ENCODE measurements at regions of chr9 and their contacts with region 1.

Region 1: DNA sequence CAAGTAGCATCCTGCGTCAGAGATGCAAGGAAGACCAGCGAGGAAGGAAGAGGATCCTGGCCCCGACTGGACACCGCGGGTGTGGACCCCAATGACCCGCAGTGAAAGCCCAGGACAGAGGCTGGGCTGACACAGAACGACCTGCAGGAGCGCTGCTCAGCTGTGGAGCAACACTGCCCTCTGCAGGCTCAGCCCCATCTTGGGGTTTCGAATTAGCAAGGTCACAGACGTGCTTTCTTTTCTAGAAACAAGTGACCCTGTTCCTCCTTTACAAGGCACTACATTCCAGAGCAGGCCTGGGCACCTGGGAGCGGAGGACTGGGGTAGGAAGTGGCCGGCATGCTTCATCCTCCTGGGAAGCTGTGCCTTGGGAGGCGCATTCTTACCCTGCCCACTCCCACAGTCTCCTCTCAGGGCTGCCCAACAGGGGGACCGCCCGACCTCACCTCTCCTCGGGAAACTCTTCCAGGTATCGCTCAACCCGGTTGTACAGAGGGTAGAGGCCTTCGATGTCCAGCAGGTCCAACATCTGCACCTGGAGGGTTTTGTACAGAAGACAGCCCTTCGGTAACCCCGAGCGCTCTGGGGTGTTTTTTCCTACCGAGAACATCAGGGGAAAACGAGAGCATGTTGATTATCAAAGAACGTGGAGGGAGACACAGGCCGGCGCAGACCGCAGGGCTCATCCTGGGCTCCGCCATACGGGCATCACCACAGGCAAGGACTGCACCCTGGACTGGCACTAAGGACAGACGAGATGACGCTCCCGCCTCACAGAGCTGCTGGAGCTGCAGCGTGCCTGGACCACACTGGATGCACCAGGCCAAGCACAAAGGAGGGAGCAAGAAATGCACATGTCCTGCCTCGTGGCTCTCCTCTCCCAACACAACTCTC is 35.0 kb downstream of the IPPK start:
- DNase-seq: peak; percentile 86 to 93
- ATAC-seq: peak; percentile 94
- H3K4me3 ChIP-seq: no peak overlapping the region
- H3K27ac ChIP-seq: no peak overlapping the region
- H3K4me1 ChIP-seq: no peaks in the 10 kb centered on the region
- H3K27me3 ChIP-seq: no peaks in the 10 kb centered on the region

Region 2: GRCh38 chr9:92140074-92140753 is 494.7 kb before region 1 on chr9:
- intact Hi-C with region 1: loop called in 1 of 2 experiments (anchors 2 kb)
- DNase-seq: peak; percentile 86 to 93
- ATAC-seq: peak; percentile 81
- H3K4me3 ChIP-seq: no peak overlapping the region
- H3K27ac ChIP-seq: no peak overlapping the region
- H3K4me1 ChIP-seq: no peaks in the 10 kb centered on the region
- H3K27me3 ChIP-seq: no peaks in the 10 kb centered on the region

Region 3: DNA sequence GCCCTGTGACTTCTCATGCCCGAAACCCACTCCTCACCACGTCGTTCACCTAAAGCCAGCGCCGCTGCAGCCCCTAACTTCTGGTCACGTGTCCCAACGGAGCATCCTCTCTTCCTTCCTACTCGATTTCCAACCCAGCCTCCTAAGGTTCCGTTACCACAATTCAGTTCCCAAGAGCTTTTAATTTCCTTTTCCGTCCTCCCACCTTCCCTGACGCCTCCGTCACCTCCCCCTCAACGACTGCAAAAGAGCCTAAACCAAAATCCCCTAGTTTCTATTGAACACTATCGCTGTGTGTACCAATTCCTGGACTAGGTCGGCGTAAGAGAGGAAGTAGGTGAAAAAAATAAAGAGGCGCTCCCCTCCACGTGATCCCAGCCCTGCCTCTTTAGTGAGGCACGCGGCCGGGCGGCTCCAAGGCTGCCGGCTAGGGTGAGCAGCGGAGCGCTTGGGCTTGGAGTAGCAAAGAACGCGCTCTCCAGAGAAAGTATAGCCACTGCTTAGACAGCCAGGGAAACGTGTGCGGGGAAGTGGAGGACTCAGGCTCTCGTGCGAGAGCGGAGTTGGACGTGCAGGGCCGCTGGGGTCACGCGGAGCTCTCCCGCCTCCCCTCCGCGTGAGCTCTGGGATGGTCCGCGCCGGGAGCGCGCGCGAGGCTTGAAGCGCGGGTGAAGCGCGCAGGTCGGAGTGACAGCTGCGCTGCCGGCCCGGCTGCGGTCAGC is 309.5 kb before region 1 on chr9 and contains the starts of genes CENPP and NOL8:
- intact Hi-C with region 1: loop called in 1 of 2 experiments (anchors 2 kb)
- DNase-seq: peak; percentile 92
- ATAC-seq: peak; percentile 98
- H3K4me3 ChIP-seq: peak within 1 kb of the TSS; percentile 62 to 88
- H3K27ac ChIP-seq: peak within 1 kb of the TSS; percentile 69 to 92
- H3K4me1 ChIP-seq: peaks cover 0 to 4% of the 10 kb centered on the region in 2 donors
- H3K27me3 ChIP-seq: no peaks in the 10 kb centered on the region
- total RNA-seq, gene CENPP: 3.9 to 11.1 TPM
- total RNA-seq, gene NOL8: 29.7 to 43.1 TPM

Region 4: DNA sequence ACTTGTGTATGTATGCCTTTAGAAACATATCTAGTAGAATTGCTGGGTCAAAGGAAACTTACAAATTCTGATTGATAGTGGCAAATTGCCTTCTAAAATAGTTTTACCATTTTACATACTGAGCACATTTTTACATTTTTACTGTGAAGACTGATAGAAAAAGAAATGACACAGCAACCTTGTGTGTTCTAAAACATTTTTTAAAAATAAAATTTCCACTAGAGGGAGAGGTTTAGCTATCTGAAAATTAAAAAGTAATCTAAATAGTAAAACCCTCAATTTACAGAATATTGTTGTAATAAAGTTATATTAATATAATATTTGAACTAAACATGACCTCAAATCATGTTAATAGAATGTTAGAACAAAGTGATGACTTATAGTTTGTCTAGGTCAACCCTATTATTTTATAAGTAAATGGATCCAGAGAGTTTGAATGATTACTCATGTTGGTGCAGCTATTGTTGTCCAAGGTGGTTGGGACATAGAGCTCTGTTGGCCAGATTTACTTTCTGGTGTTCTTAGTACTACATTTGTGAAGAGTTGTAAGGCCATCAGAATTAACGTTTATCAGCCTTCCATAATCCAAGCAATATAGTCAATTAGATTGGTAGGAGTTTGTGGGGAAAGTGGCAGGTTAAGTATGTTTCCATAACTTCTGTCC is 292.0 kb before region 1 on chr9:
- intact Hi-C with region 1: loop called (anchors 2 to 5 kb)
- DNase-seq: no peak
- ATAC-seq: no peak
- H3K4me3 ChIP-seq: no peak overlapping the region
- H3K27ac ChIP-seq: no peak overlapping the region
- H3K4me1 ChIP-seq: peaks cover 0 to 2% of the 10 kb centered on the region in 2 donors
- H3K27me3 ChIP-seq: no peaks in the 10 kb centered on the region

Region 5: GRCh38 chr9:92438900-92439526 is 195.9 kb before region 1 on chr9:
- intact Hi-C with region 1: loop called in 1 of 2 experiments (anchors 5 kb)
- DNase-seq: no peak
- ATAC-seq: no peak
- H3K4me3 ChIP-seq: no peak overlapping the region
- H3K27ac ChIP-seq: no peak overlapping the region
- H3K4me1 ChIP-seq: peaks cover 0 to 2% of the 10 kb centered on the region in 2 donors
- H3K27me3 ChIP-seq: no peaks in the 10 kb centered on the region

Region 6: DNA sequence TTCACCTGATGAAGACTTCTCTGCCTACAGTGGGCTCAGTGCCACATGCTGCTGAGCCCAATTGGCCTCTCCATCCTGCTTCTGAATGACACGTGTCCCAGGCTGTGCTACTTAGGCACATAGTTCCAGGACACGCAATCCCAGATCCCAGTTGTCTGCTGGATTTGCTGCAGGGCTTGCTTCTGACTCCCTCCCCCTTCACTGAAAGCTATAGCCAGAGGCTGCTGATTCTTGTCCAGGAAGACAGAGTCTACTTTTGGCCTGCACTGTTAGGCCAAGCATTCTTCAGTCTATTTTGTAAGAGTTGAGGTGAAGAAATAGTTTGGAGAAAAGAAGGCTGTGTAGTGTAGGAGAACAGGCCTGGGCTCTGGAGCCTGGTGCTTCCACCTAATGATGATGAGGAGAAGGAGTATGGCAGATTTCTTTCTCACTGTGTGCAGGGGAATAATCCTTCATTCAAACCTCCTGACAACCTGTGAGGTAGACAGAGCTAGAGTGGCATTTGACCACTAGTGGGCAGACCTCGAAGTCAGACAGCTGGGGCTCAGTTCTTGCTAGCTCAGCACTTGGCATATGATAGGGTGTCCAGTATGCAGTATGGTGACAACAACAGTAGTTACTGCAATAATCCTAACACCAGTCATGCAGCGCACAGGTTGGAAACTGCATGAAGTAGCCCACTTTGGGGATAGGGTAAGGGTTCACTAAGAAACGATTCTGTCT is 133.1 kb before region 1 on chr9:
- intact Hi-C with region 1: loop called in 1 of 2 experiments (anchors 10 kb)
- DNase-seq: peak in 1 of 2 donors; percentile 68
- ATAC-seq: peak; percentile 71
- H3K4me3 ChIP-seq: no peak overlapping the region
- H3K27ac ChIP-seq: peak overlapping the region; percentile 52 to 90
- H3K4me1 ChIP-seq: peaks cover 4 to 6% of the 10 kb centered on the region in 2 donors
- H3K27me3 ChIP-seq: no peaks in the 10 kb centered on the region

Region 7: GRCh38 chr9:92650839-92651621 is 16.1 kb after region 1 on chr9:
- intact Hi-C with region 1: no loop called
- DNase-seq: peak; percentile 63 to 77
- ATAC-seq: peak; percentile 37
- H3K4me3 ChIP-seq: no peak overlapping the region
- H3K27ac ChIP-seq: no peak overlapping the region
- H3K4me1 ChIP-seq: no peaks in the 10 kb centered on the region
- H3K27me3 ChIP-seq: no peaks in the 10 kb centered on the region